ENCODE measurements at regions of chr12 and their contacts with region 1.

Region 1: DNA sequence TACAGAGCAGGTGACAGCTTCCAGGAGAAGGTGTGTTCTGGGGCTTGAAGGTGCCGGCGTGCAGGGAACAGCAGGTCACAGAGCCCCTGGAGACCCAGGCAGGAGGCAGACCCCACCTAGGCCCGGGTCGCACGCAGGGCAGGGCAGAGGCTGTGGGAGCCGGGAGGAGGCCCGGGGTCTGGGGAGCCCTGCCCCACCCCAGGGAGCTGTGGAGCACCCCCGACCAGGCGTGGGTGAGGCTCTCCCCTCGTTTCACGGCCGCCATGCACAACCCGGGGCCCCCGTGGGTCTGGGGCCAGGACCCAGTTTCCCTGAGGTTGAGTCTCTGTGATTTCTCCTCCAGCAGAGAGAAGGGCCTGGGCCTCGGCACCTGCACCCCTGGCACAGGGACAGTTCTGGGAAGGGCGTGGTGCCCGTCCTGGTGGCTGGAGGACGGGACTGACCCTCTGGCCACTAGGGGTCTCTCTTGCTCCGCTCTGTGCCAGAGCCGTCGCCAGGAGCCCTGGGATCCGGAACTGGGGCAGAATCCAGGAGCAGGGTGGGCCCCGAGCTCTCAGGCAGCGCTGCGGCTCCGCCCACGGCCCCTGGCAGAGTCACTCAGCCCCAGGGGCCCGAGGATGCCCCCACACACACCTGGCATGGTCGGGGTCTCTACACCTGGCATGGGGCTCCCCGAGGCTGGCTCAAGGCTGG is 75.2 kb upstream of the FBRSL1 start:
- DNase-seq: peak; percentile 87
- ATAC-seq: peak; percentile 93
- H3K4me3 Mint-ChIP-seq: no peak overlapping the region
- H3K27ac Mint-ChIP-seq: no peak overlapping the region
- H3K4me1 Mint-ChIP-seq: no peaks in the 10 kb centered on the region
- H3K27me3 Mint-ChIP-seq: peaks cover 40% of the 10 kb centered on the region
- CTCF ChIP-seq: peak; percentile 78

Region 2: DNA sequence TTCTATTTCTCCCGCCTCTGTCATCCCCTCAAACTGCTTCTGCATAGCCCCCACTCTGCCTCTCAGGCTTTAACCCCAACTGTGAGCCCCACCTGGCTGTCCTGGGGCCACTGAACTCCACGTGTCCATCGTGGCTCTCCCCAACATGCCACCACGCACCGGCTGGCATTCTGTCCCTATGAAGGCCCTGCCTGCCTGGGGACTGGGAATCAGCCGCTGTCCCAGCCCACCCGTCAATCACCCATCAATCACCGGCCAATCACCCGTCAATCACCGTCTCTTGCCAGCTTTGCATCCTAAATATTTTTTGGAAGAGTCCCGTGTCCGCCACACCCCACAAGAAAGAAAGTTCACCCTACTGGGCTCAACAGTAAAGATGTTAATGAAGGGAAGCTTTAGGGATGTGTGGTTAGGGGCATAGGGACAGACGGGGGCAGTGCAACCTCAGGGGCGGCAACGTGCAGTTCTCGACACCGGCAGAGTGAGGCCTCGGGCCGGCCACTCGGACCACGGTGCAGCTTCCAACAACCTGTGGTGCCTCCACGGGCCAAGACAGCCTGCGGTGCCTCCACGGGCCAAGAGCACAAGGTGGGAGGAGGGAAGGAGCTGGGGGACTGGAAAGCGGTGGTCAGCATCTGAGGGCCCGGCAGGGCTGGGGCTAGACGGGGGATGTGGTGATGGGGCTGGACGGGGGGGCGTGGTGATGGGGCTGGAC is 171.0 kb before region 1 on chr12:
- CTCF ChIA-PET with region 1: interaction called, 10 read pairs
- POLR2A ChIA-PET with region 1: no interaction called
- DNase-seq: peak; percentile 44
- ATAC-seq: peak; percentile 20; the same call in 1 of the 2 replicates
- H3K4me3 Mint-ChIP-seq: no peak overlapping the region
- H3K27ac Mint-ChIP-seq: no peak overlapping the region
- H3K4me1 Mint-ChIP-seq: no peaks in the 10 kb centered on the region
- H3K27me3 Mint-ChIP-seq: peaks cover 15% of the 10 kb centered on the region
- CTCF ChIP-seq: no peak

Region 3: GRCh38 chr12:132327351-132328171 is 87.2 kb before region 1 on chr12:
- CTCF ChIA-PET with region 1: interaction called, 43 read pairs
- POLR2A ChIA-PET with region 1: no interaction called
- DNase-seq: no peak
- ATAC-seq: no peak
- H3K4me3 Mint-ChIP-seq: no peak overlapping the region
- H3K27ac Mint-ChIP-seq: no peak overlapping the region
- H3K4me1 Mint-ChIP-seq: no peaks in the 10 kb centered on the region
- H3K27me3 Mint-ChIP-seq: peaks cover 79% of the 10 kb centered on the region
- CTCF ChIP-seq: no peak

Region 4: GRCh38 chr12:132385923-132386751 is 28.6 kb before region 1 on chr12:
- CTCF ChIA-PET with region 1: interaction called, 23 read pairs
- POLR2A ChIA-PET with region 1: no interaction called
- DNase-seq: peak; percentile 26
- ATAC-seq: no peak; the same call in none of the 2 replicates
- H3K4me3 Mint-ChIP-seq: peak overlapping the region; percentile 52
- H3K27ac Mint-ChIP-seq: no peak overlapping the region
- H3K4me1 Mint-ChIP-seq: peaks cover 15% of the 10 kb centered on the region
- H3K27me3 Mint-ChIP-seq: peaks cover 27% of the 10 kb centered on the region
- CTCF ChIP-seq: no peak

Region 5: DNA sequence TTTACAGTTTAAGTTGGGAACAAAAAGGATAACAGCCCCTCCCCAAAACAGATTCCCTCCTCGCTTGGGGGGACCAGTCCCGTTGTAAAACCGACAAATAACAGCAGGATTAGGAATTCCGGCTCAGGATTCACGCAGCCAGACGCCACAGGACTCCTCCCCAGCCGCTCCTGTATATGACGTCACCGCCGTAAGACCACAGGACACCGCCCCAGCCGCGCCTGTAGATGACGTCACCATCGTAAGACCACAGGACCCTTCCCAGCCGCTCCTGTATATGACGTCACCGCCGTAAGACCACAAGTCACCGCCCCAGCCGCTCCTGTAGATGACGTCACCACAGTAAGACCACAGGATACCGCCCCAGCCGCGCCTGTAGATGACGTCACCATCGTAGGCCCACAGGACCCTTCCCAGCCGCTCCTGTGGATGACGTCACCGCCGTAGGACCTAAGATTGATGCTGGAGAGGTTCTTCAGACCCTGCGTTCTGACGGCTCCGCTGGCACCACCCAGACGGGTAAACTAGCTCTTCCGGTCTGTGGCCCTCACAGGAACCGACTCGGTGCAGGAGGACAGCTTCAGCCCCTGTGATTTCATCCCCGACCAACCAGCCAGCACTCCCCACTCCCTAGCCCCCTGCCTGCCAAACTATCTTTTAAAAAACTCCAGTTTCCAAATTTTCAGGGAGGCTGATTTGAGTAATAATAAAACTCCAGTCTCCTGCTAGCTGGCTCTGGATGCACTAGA is 31.3 kb after region 1 on chr12:
- CTCF ChIA-PET with region 1: interaction called, 19 read pairs
- POLR2A ChIA-PET with region 1: no interaction called
- DNase-seq: peak; percentile 83
- ATAC-seq: peak; percentile 51
- H3K4me3 Mint-ChIP-seq: peak overlapping the region; percentile 76
- H3K27ac Mint-ChIP-seq: peak overlapping the region; percentile 94
- H3K4me1 Mint-ChIP-seq: peaks cover 14% of the 10 kb centered on the region
- H3K27me3 Mint-ChIP-seq: peaks cover 85% of the 10 kb centered on the region
- CTCF ChIP-seq: no peak

Region 6: GRCh38 chr12:132554842-132555630 is 140.3 kb after region 1 on chr12:
- CTCF ChIA-PET with region 1: interaction called, 32 read pairs
- POLR2A ChIA-PET with region 1: interaction called, 4 read pairs
- DNase-seq: peak; percentile 46
- ATAC-seq: no peak
- H3K4me3 Mint-ChIP-seq: no peak overlapping the region
- H3K27ac Mint-ChIP-seq: no peak overlapping the region
- H3K4me1 Mint-ChIP-seq: peaks cover 3% of the 10 kb centered on the region; the same call in 1 of the 2 replicates
- H3K27me3 Mint-ChIP-seq: peaks cover 86% of the 10 kb centered on the region
- CTCF ChIP-seq: peak; percentile 41

Region 7: DNA sequence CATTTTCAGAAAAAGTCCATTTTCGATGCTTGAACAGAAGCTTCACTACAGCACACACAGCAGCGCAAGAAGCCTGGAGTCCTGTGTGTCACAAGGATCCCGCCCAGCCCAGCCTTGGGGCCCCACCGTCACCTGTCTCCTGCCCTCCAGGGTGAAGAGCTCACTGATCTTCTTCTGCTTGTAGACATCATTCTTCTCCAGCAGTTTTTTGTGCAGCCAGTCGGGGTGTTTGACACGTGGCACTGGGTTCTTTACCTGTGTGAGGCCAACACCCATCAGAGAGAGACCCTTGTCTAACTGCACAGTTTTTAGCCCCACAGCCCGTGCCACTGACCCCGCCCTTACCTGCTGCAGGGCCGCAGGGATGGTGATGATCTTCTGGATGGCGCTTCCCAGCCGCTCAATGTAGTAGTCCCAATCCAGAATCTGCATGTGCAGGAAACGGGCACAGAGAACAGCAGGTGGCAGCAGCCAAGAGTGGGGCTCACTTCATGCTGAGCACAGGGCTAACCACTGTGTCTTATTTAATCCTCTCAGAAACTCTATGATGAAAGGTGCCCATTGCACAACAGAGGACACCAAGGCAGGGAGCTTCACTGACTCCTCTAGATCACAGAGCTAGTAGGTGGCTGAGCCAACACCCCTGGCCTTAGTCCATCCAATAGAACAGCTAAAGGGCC is 242.4 kb after region 1 on chr12:
- CTCF ChIA-PET with region 1: no interaction called
- POLR2A ChIA-PET with region 1: no interaction called
- DNase-seq: no peak
- ATAC-seq: no peak
- H3K4me3 Mint-ChIP-seq: no peak overlapping the region
- H3K27ac Mint-ChIP-seq: no peak overlapping the region
- H3K4me1 Mint-ChIP-seq: no peaks in the 10 kb centered on the region
- H3K27me3 Mint-ChIP-seq: no peaks in the 10 kb centered on the region
- CTCF ChIP-seq: no peak